ENCODE measurements at regions of chr17 and their contacts with region 1.

Region 1: DNA sequence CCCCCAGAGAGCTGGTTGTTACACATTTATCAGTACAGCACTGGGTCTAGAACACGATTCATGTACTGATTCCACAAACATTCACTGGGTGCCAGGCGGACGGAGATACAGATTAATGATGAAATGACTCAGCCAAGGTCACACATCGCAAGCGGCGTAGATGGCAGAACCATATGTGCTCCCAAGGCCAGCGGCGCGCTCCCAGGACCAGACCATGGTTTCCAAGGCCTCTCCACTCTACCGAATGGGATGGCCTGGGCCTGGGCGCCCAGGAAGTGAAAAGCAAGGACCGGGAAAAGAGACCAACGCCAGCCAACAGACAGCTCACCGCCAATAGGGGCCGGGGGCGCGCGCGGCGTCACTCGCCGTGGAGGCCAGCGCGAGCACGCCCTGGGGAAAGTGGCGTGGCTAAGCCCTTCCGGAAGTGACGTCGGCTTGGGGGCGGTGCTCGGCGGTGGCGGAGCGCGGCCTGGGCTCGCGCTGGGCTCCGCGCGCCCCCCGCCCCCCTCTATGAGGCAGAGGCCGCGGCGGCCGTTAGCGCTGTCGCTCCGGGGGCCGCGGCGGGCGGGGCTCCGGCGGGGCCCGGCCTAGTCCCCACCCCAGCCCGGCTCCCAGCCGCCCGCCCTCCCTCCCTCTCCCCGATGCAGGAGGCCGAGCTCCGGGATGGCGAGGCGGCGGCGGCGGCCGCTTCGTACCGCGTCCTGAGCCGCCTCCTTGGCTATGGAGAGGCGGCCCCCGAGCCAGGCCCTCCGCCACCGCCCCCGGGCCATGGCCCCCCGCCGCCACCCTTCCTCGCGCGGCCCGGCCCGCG is at the start of gene SOCS7:
- DNase-seq: peak; percentile 95
- ATAC-seq: peak; percentile 89
- H3K4me3 Mint-ChIP-seq: peak within 1 kb of the TSS; percentile 85
- H3K27ac Mint-ChIP-seq: peak within 1 kb of the TSS; percentile 94
- H3K4me1 Mint-ChIP-seq: peaks cover 49% of the 10 kb centered on the region
- H3K27me3 Mint-ChIP-seq: no peaks in the 10 kb centered on the region
- total RNA-seq, gene SOCS7: 21.8 to 25.3 TPM

Region 2: DNA sequence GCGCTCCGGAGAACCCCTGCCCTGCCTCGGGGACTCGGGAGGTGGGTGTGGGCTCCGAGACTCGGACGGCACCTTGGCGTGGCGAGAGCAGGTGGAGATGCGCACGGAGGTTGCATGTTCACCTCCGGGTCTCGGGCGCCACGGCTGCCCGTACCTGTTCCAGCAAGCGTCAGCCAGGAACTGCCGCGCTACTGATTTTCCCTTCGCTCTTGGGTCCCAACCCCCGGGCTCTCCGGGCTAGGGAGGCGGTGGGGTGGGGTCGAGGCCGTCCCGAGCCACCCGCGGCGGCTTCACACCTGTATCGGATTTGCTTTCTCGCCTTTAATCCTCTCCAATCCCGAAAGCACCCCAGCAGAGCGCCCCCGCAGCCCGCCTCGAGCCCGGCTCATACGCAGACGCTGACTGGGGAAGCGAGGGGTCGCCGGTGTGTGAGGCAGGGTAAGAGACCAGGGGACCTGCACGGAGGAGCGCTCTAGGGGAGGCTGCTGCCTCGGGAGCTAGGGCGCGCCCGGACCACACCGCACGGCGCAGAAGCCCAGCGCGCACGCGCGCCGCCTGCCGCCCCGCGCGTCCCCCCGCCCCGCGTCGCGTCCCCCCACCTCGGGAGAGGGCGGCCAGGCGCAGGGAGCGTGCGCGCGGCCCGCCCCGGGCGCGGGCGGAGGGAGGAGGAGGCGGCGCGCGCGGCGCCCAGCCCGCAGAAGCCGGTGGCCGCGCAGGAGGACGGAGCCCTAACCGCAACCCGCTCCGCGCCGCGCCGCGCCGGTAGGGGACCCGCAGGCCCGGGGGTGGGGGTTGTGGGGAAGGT is 862.2 kb before region 1 on chr17 and contains the start of gene DUSP14:
- CTCF ChIA-PET with region 1: no interaction called
- POLR2A ChIA-PET with region 1: no interaction called
- intact Hi-C with region 1: loop called in 1 of 2 experiments (anchors 5 kb)
- DNase-seq: peak; percentile 88
- ATAC-seq: peak; percentile 74
- H3K4me3 Mint-ChIP-seq: peak within 1 kb of the TSS; percentile 88
- H3K27ac Mint-ChIP-seq: peak within 1 kb of the TSS; percentile 93
- H3K4me1 Mint-ChIP-seq: peaks cover 44% of the 10 kb centered on the region
- H3K27me3 Mint-ChIP-seq: no peaks in the 10 kb centered on the region
- total RNA-seq, gene DUSP14: 11.9 to 13.1 TPM

Region 3: DNA sequence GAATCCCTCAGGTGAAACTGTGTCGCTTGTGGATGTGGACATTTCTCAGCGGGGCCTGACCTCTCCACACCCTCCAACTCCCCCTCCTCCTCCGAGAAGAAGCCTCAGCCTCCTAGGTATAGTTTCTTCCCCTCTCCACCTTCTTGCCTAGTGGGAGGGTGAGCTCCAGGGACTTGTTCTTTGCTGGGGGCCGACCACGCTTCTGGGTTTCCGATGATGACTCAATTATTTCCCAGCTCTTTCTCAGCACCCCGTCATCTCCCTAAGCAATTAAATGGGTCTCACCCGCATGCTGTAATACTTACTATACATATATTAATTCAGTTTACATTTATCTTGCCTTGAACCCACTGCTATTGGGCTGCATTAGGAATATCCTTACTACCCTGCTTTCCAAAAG is 13.1 kb after region 1 on chr17:
- CTCF ChIA-PET with region 1: interaction called, 16 read pairs
- POLR2A ChIA-PET with region 1: no interaction called
- intact Hi-C with region 1: no loop called
- DNase-seq: no peak
- ATAC-seq: no peak
- H3K4me3 Mint-ChIP-seq: no peak overlapping the region
- H3K27ac Mint-ChIP-seq: no peak overlapping the region
- H3K4me1 Mint-ChIP-seq: no peaks in the 10 kb centered on the region
- H3K27me3 Mint-ChIP-seq: no peaks in the 10 kb centered on the region

Region 4: GRCh38 chr17:38428112-38428642 is 76.6 kb after region 1 on chr17 and contains the start of gene ARHGAP23:
- CTCF ChIA-PET with region 1: interaction called, 13 read pairs
- POLR2A ChIA-PET with region 1: no interaction called
- intact Hi-C with region 1: no loop called
- DNase-seq: peak; percentile 59
- ATAC-seq: peak; percentile 45
- H3K4me3 Mint-ChIP-seq: peak within 1 kb of the TSS; percentile 69
- H3K27ac Mint-ChIP-seq: no peak within 1 kb of the TSS
- H3K4me1 Mint-ChIP-seq: peaks cover 9% of the 10 kb centered on the region
- H3K27me3 Mint-ChIP-seq: peaks cover 14% of the 10 kb centered on the region
- total RNA-seq, gene ARHGAP23: 0.55 to 0.86 TPM

Region 5: DNA sequence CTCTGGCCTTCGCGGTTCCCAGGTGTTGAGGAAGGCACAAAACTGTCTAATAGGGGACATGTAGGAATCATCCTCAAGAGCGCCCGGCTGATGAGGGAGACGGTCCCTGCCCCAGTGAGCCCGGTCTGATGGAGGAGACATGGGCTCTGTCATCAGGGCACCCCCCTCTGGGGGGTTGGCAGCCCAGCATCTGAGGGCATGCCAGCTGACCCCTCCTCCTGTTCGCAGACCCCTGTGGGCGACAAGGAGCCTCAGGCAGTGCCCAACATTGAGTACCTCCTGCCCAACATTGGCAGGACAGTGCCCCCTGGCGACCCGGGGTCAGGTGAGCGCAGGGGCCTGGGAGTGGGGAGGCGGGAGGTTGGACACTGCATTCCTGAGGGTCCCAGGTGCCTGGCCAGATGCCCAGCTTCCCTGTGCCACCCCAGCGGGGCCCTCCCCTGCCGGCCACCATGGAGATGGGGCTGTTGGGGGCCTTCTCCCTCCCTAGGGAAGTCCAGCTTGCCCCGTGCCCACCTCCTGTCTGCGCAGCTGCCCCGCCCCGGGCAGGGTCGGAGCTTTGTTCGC is 146.7 kb after region 1 on chr17:
- CTCF ChIA-PET with region 1: no interaction called
- POLR2A ChIA-PET with region 1: no interaction called
- intact Hi-C with region 1: no loop called
- DNase-seq: no peak
- ATAC-seq: no peak
- H3K4me3 Mint-ChIP-seq: no peak overlapping the region
- H3K27ac Mint-ChIP-seq: no peak overlapping the region
- H3K4me1 Mint-ChIP-seq: no peaks in the 10 kb centered on the region
- H3K27me3 Mint-ChIP-seq: no peaks in the 10 kb centered on the region

Region 6: GRCh38 chr17:38557836-38558727 is 206.5 kb after region 1 on chr17:
- CTCF ChIA-PET with region 1: interaction called, 4 read pairs
- POLR2A ChIA-PET with region 1: no interaction called
- intact Hi-C with region 1: loop called in 1 of 2 experiments (anchors 1 kb)
- DNase-seq: peak; percentile 95
- ATAC-seq: peak; percentile 85
- H3K4me3 Mint-ChIP-seq: peak overlapping the region; percentile 73
- H3K27ac Mint-ChIP-seq: no peak overlapping the region
- H3K4me1 Mint-ChIP-seq: peaks cover 22% of the 10 kb centered on the region
- H3K27me3 Mint-ChIP-seq: peaks cover 23% of the 10 kb centered on the region

Region 7: GRCh38 chr17:38674749-38675615 is 323.4 kb after region 1 on chr17 and contains the start of gene EPOP:
- CTCF ChIA-PET with region 1: no interaction called
- POLR2A ChIA-PET with region 1: no interaction called
- intact Hi-C with region 1: loop called in 1 of 2 experiments (anchors 1 kb)
- DNase-seq: peak; percentile 96
- ATAC-seq: peak; percentile 78
- H3K4me3 Mint-ChIP-seq: peak within 1 kb of the TSS; percentile 76
- H3K27ac Mint-ChIP-seq: peak within 1 kb of the TSS; percentile 85
- H3K4me1 Mint-ChIP-seq: peaks cover 47% of the 10 kb centered on the region
- H3K27me3 Mint-ChIP-seq: peaks cover 9% of the 10 kb centered on the region
- total RNA-seq, gene EPOP: 31.8 to 37.3 TPM

Region 8: DNA sequence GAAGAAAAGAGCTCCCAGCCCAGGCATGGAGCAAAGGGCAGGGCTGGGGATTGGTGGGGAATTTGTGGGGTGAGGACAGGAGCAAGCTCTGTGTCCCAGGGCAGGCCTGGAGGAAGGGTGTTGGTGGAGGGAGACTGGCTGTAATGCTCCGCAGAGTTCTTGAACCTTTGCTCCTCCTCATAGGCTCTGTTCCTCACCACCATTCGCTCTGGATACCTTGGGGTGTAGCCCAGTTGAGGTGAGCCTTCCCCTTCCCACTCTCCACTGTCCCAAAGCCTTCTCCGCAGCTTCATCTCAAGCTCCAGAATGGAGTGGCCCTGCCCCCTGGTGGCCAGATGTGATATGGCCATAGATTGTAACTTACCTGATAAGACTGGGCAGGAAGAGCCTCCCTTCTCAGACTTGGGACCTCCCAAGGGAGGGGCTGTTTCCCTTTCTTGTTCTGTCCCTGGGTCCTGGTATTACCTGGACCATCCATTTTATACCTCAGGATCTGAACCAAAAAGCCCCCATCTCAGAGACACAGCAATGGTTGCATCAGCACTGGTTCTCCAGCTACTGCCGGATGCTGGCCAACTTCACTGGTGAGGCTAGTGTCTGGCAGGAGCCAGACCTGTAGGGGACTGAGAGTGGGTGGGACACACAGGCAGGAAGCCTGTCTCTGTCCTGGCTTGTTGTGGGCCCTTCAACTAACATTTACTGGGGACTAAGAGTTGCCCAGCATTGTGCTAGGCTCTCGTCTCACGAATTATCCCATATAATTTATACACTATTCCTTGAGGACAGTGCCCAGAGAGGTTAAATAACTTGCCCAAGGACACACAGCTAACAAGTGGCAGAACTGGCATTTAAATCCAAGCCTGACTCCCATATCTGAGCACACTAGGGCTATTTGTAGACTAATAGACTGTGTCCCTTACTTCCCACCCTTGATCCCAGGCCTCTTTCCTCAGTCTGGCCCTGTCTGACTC is 893.3 kb after region 1 on chr17:
- CTCF ChIA-PET with region 1: no interaction called
- POLR2A ChIA-PET with region 1: no interaction called
- intact Hi-C with region 1: no loop called
- DNase-seq: peak; percentile 93
- ATAC-seq: peak; percentile 96
- H3K4me3 Mint-ChIP-seq: no peak overlapping the region
- H3K27ac Mint-ChIP-seq: no peak overlapping the region
- H3K4me1 Mint-ChIP-seq: peaks cover 3% of the 10 kb centered on the region
- H3K27me3 Mint-ChIP-seq: no peaks in the 10 kb centered on the region